Naive thymus-derived CD8-positive, alpha-beta T cell (primary cell): ENCODE measurements at regions of chr7 and their contacts with region 1.

Region 1: GRCh38 chr7:140249036-140249806 is 72.4 kb upstream of the KDM7A start:
- DNase-seq: no peak
- ATAC-seq: no peak
- H3K4me3 Mint-ChIP-seq: no peak overlapping the region
- H3K27ac Mint-ChIP-seq: peak overlapping the region in 1 of 10 donors; percentile 21
- H3K4me1 Mint-ChIP-seq: peaks cover 8 to 22% (median 15%) of the 10 kb centered on the region in 4 donors
- H3K27me3 Mint-ChIP-seq: no peaks in the 10 kb centered on the region

Region 2: DNA sequence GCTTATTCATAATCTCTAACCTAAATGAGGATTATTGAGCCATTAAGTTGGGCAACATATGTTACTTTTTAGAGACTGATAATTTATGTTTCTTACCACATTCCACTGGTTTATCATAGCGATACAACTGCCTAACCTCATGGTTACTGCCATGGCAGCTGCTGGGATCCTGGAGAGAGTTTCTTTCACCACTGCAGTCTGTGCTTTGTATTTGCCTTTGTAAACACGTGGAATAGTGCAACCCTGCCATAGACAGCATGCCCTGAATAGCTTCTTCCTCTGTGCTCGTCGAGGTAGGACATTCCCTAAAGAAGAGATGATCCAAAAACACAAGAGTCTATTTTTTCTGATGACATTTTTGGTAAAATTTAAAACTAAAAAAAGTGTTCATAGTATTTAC is 152.8 kb before region 1 on chr7:
- POLR2A ChIA-PET with region 1: no interaction called
- DNase-seq: no peak
- ATAC-seq: no peak
- H3K4me3 Mint-ChIP-seq: no peak overlapping the region
- H3K27ac Mint-ChIP-seq: peak overlapping the region in 3 of 10 donors; percentile 26 to 44 (median 29)
- H3K4me1 Mint-ChIP-seq: peaks cover 0 to under 1% (median 0%) of the 10 kb centered on the region in 4 donors
- H3K27me3 Mint-ChIP-seq: no peaks in the 10 kb centered on the region

Region 3: GRCh38 chr7:140260352-140261104 is 11.3 kb after region 1 on chr7:
- POLR2A ChIA-PET with region 1: interaction called, 33 read pairs
- DNase-seq: no peak
- ATAC-seq: no peak
- H3K4me3 Mint-ChIP-seq: peak overlapping the region in 2 of 10 donors; percentile 10 to 34
- H3K27ac Mint-ChIP-seq: peak overlapping the region in 9 of 10 donors; percentile 6 to 95 (median 82)
- H3K4me1 Mint-ChIP-seq: peaks cover 34 to 58% (median 55%) of the 10 kb centered on the region in 4 donors
- H3K27me3 Mint-ChIP-seq: no peaks in the 10 kb centered on the region